RWPE1 (cell line): ENCODE measurements at regions of chr11 and their contacts with region 1.

Region 1: GRCh38 chr11:64341851-64342791 is 2.1 kb downstream of the CCDC88B start:
- DNase-seq: peak; percentile 88
- H3K27ac ChIP-seq: peak overlapping the region; percentile 92
- CTCF ChIP-seq: peak; percentile 82

Region 2: GRCh38 chr11:64317957-64318693 is 24.0 kb before region 1 on chr11 and contains the start of gene PRDX5:
- CTCF ChIA-PET with region 1: interaction called, 10 read pairs
- POLR2A ChIA-PET with region 1: interaction called, 9 read pairs
- DNase-seq: peak; percentile 90
- H3K27ac ChIP-seq: peak within 1 kb of the TSS; percentile 100
- CTCF ChIP-seq: peak; percentile 58